ENCODE measurements at regions of chr19 and their contacts with region 1.

Region 1: GRCh38 chr19:45779231-45780145 is 2.8 kb downstream of the DMPK start:
- DNase-seq: peak; percentile 95
- H3K4me3 Mint-ChIP-seq: peak overlapping the region; percentile 58
- H3K27ac Mint-ChIP-seq: no peak overlapping the region
- H3K4me1 Mint-ChIP-seq: peaks cover 28% of the 10 kb centered on the region
- H3K27me3 Mint-ChIP-seq: no peaks in the 10 kb centered on the region
- CTCF ChIP-seq: peak; percentile 68

Region 2: GRCh38 chr19:45485305-45486077 is 294.0 kb before region 1 on chr19:
- CTCF ChIA-PET with region 1: no interaction called
- POLR2A ChIA-PET with region 1: no interaction called
- intact Hi-C with region 1: no loop called
- DNase-seq: peak; percentile 98
- H3K4me3 Mint-ChIP-seq: peak overlapping the region; percentile 87
- H3K27ac Mint-ChIP-seq: peak overlapping the region; percentile 42
- H3K4me1 Mint-ChIP-seq: peaks cover 5% of the 10 kb centered on the region
- H3K27me3 Mint-ChIP-seq: no peaks in the 10 kb centered on the region
- CTCF ChIP-seq: peak; percentile 76

Region 3: GRCh38 chr19:45739498-45740439 is 39.7 kb before region 1 on chr19:
- CTCF ChIA-PET with region 1: no interaction called
- POLR2A ChIA-PET with region 1: no interaction called
- intact Hi-C with region 1: no loop called
- DNase-seq: no peak
- H3K4me3 Mint-ChIP-seq: no peak overlapping the region
- H3K27ac Mint-ChIP-seq: no peak overlapping the region
- H3K4me1 Mint-ChIP-seq: no peaks in the 10 kb centered on the region
- H3K27me3 Mint-ChIP-seq: no peaks in the 10 kb centered on the region
- CTCF ChIP-seq: no peak

Region 4: GRCh38 chr19:45792470-45793177 is 13.1 kb after region 1 on chr19 and contains the start of gene DMWD:
- CTCF ChIA-PET with region 1: no interaction called
- POLR2A ChIA-PET with region 1: interaction called, 24 read pairs
- intact Hi-C with region 1: loop called (anchors 1 kb)
- DNase-seq: peak; percentile 99
- H3K4me3 Mint-ChIP-seq: peak within 1 kb of the TSS; percentile 78
- H3K27ac Mint-ChIP-seq: peak within 1 kb of the TSS; percentile 90
- H3K4me1 Mint-ChIP-seq: peaks cover 28% of the 10 kb centered on the region
- H3K27me3 Mint-ChIP-seq: no peaks in the 10 kb centered on the region
- CTCF ChIP-seq: no peak
- total RNA-seq, gene DMWD: 57.5 and 71.6 TPM in 2 replicates

Measured in MCF 10A (cell line).